HEK293 (cell line): ENCODE measurements at regions of chr1 and their contacts with region 1.

Region 1: GRCh38 chr1:15128520-15129313 is 24.8 kb upstream of the TMEM51 start:
- H3K4me3 ChIP-seq: no peak overlapping the region
- H3K27ac ChIP-seq: no peak overlapping the region
- H3K4me1 ChIP-seq: no peaks in the 10 kb centered on the region
- CTCF ChIP-seq: 0 out of 2 replicates have a peak, but pooled peaks have one; percentile 33

Region 2: GRCh38 chr1:15110875-15111230 is 17.9 kb before region 1 on chr1:
- CTCF ChIA-PET with region 1: interaction called, 10 read pairs
- POLR2A ChIA-PET with region 1: no interaction called
- H3K4me3 ChIP-seq: no peak overlapping the region
- H3K27ac ChIP-seq: no peak overlapping the region
- H3K4me1 ChIP-seq: no peaks in the 10 kb centered on the region
- CTCF ChIP-seq: no peak; the same call in 1 of the 2 replicates

Region 3: GRCh38 chr1:15146971-15147376 is 18.3 kb after region 1 on chr1:
- CTCF ChIA-PET with region 1: interaction called, 32 read pairs
- POLR2A ChIA-PET with region 1: interaction called, 3 read pairs
- H3K4me3 ChIP-seq: no peak overlapping the region
- H3K27ac ChIP-seq: no peak overlapping the region
- H3K4me1 ChIP-seq: no peaks in the 10 kb centered on the region
- CTCF ChIP-seq: no peak

Region 4: DNA sequence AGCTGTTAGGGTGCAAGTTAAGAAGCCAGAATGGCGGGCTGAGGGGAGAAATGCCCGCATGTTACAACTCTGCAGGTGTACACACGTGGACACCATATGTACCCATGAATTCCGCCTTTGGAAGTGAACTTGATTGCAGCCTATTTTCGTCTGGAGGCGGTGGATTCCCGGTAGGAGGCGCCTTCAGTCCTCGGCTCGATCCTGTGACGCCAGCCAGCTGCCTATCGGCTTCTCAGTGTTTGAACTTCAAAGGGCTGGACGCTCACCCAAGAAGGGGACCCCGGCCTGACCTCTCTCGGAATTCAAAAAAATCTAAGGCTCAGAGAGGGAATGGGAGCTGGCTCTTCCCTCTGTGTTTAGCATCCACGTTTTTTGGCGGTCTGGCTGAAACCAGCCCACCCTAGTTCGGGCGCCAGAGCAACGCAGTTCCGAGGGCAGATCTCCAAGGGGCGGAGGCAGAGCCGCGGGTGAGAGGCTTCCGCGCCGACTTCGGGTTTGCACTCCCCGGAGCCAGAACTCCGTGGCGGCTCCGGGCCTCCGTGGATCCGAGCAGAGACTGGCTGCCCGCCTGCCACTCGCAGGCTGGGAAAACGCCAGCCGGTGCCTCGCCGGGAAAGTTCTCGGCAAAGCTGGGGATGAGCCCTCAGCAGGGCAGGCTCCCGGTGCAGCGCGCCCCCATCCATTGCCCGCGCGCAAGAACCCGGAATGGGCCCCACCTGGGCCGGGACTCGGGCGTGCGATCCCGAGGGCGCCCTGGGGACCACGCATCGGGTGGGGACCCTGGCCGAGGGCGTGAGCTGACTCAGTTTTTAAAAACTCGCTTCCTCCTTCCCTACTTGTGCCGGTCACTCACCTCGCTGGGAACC is 23.8 kb after region 1 on chr1:
- CTCF ChIA-PET with region 1: interaction called, 32 read pairs
- POLR2A ChIA-PET with region 1: interaction called, 3 read pairs
- H3K4me3 ChIP-seq: peak overlapping the region; percentile 60
- H3K27ac ChIP-seq: peak overlapping the region; percentile 49; the same call in 1 of the 2 replicates
- H3K4me1 ChIP-seq: 0 out of 2 replicates have a peak, but pooled peaks cover 2% of the 10 kb centered on the region
- CTCF ChIP-seq: peak; percentile 37